Heart right ventricle (tissue), 16 donors: ENCODE measurements at regions of chr1 and their contacts with region 1.

Region 1: GRCh38 chr1:81549604-81550127 is 251.1 kb upstream of the ADGRL2 start:
- DNase-seq: no peak
- ATAC-seq: peak in 6 of 8 donors; percentile 59 to 75 (median 68)
- H3K4me3 ChIP-seq: no peak overlapping the region
- H3K27ac ChIP-seq: no peak overlapping the region
- H3K4me1 ChIP-seq: peaks cover 0 to 13% (median 0%) of the 10 kb centered on the region in 9 donors
- H3K27me3 ChIP-seq: no peaks in the 10 kb centered on the region
- CTCF ChIP-seq: peak; percentile 6 to 66 (median 48)

Region 2: GRCh38 chr1:81305997-81306452 is 243.6 kb before region 1 on chr1:
- intact Hi-C with region 1: loop called in 3 of 10 experiments (anchors 10 kb)
- DNase-seq: peak in 1 of 2 donors; percentile 24
- ATAC-seq: peak; percentile 84 to 94 (median 91)
- H3K4me3 ChIP-seq: peak overlapping the region; percentile 26 to 64 (median 55)
- H3K27ac ChIP-seq: peak overlapping the region in 6 of 10 donors; percentile 13 to 55 (median 18)
- H3K4me1 ChIP-seq: no peaks in the 10 kb centered on the region
- H3K27me3 ChIP-seq: no peaks in the 10 kb centered on the region
- CTCF ChIP-seq: peak in 8 of 9 donors; percentile 32 to 76 (median 56)

Region 3: GRCh38 chr1:81509594-81509993 is 40.1 kb before region 1 on chr1:
- intact Hi-C with region 1: no loop called
- DNase-seq: no peak
- ATAC-seq: peak in 1 of 8 donors; percentile 35
- H3K4me3 ChIP-seq: no peak overlapping the region
- H3K27ac ChIP-seq: no peak overlapping the region
- H3K4me1 ChIP-seq: peaks cover 0 to 7% (median 0%) of the 10 kb centered on the region in 9 donors
- H3K27me3 ChIP-seq: no peaks in the 10 kb centered on the region
- CTCF ChIP-seq: no peak

Region 4: GRCh38 chr1:82073071-82073470 is 523.4 kb after region 1 on chr1:
- intact Hi-C with region 1: no loop called
- DNase-seq: no peak
- ATAC-seq: no peak
- H3K4me3 ChIP-seq: no peak overlapping the region
- H3K27ac ChIP-seq: no peak overlapping the region
- H3K4me1 ChIP-seq: peaks cover 0 to 6% (median 0%) of the 10 kb centered on the region in 9 donors
- H3K27me3 ChIP-seq: no peaks in the 10 kb centered on the region
- CTCF ChIP-seq: no peak